Mucosa of descending colon (tissue), 3 donors: ENCODE measurements at regions of chr1 and their contacts with region 1.

Region 1: DNA sequence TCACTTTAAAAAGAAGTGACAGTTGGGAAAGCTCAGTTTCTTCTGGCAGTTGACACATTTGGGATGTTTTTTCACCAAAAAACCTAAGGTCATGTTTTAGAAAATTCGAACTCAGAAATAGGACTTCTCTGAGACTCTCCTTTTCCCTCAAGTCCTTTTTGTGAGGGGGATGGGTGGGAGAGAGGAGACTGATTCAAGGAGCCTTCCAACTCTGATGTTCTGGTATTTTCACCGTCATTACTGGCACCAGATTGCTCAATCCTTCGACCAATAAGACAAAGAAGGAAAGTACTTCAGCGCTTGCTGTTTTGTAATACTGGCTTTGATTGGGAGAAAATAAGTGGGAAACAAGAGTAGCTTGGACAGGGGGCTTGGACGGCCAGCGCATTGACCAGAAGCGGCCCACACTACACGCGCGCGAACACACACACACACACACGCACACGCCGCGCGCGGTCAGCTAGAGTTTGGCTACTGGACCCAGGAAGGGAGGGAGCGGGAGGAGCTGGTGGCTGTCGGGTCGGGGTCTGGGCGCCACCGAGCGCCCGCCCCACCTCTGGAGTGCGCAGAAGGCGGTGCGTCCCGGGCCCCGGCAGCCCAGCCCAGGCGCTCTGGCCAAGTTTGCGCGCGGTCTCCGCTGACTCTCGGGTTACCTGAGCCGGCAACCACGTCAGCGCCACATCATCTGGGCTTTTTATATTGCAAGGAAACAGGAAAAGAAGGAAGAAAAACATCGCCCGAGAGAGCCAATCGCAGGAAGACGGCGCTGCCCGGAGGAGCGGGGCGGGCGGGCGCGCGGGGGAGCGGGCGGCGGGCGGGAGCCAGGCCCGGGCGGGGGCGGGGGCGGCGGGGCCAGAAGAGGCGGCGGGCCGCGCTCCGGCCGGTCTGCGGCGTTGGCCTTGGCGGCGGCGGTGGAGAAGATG is at the start of gene KCNK1:
- DNase-seq: peak; percentile 86 to 92 (median 89)
- ATAC-seq: peak; percentile 84
- H3K4me3 ChIP-seq: peak within 1 kb of the TSS; percentile 46
- H3K4me1 ChIP-seq: peaks cover 10% of the 10 kb centered on the region
- CTCF ChIP-seq: no peak
- total RNA-seq, gene KCNK1: 22.2 to 44.8 (median 43.6) TPM

Region 2: DNA sequence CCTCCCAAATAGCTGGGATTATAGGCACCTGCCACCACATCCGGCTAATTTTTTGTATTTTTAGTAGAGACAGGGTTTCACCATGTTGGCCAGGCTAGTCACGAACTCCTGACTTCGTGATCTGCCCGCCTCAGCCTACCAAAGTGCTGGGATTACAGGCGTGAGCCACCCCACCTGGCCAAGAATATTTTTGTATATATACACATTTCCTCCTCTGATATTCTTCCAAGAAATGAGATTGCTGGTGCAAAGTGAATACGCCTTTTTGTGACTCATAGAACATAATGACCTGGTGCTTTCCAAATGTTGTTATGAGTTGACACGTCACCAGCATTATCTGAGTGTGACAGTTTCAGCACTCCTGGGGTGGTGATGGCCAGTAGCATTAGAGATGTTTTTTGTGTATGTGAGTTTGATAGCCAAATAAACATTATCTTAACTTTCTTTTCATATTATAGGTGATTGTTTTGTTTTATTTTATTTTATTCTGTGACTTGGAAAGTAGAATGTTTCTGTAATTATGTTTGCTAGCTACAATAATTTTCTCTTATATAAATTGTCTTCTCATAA is 55.3 kb after region 1 on chr1:
- intact Hi-C with region 1: loop called in 1 of 2 experiments (anchors 2 kb)
- DNase-seq: peak in 2 of 3 donors; percentile 42 to 61
- ATAC-seq: peak; percentile 94
- H3K4me3 ChIP-seq: no peak overlapping the region
- H3K4me1 ChIP-seq: peaks cover 3% of the 10 kb centered on the region
- CTCF ChIP-seq: no peak

Region 3: GRCh38 chr1:233750140-233750539 is 136.6 kb after region 1 on chr1:
- intact Hi-C with region 1: no loop called
- DNase-seq: no peak
- ATAC-seq: no peak
- H3K4me3 ChIP-seq: no peak overlapping the region
- H3K4me1 ChIP-seq: no peaks in the 10 kb centered on the region
- CTCF ChIP-seq: no peak